ENCODE measurements at regions of chrX and their contacts with region 1.

Region 1: GRCh38 chrX:20128670-20129069 is 12.0 kb upstream of the MAP7D2 start:
- DNase-seq: no peak
- ATAC-seq: no peak
- H3K4me3 ChIP-seq: no peak overlapping the region
- H3K27ac ChIP-seq: no peak overlapping the region
- H3K4me1 ChIP-seq: no peaks in the 10 kb centered on the region
- H3K27me3 ChIP-seq: no peaks in the 10 kb centered on the region
- CTCF ChIP-seq: no peak
- EP300 ChIP-seq: no peak
- POLR2A ChIP-seq: no peak
- RAD21 ChIP-seq: no peak

Region 2: GRCh38 chrX:18920566-18920965 is 1208.1 kb before region 1 on chrX:
- CTCF ChIA-PET with region 1: no interaction called
- POLR2A ChIA-PET with region 1: interaction called, 11 read pairs
- RAD21 ChIA-PET with region 1: no interaction called
- SMC1A ChIA-PET with region 1: no interaction called
- in situ Hi-C with region 1: no loop called
- intact Hi-C with region 1: no loop called
- DNase-seq: no peak
- ATAC-seq: no peak
- H3K4me3 ChIP-seq: no peak overlapping the region
- H3K27ac ChIP-seq: no peak overlapping the region
- H3K4me1 ChIP-seq: no peaks in the 10 kb centered on the region
- H3K27me3 ChIP-seq: no peaks in the 10 kb centered on the region
- CTCF ChIP-seq: no peak
- EP300 ChIP-seq: no peak
- POLR2A ChIP-seq: no peak
- RAD21 ChIP-seq: no peak

Measured in GM12878 (cell line).